ENCODE measurements at regions of chr1 and their contacts with region 1.

Region 1: DNA sequence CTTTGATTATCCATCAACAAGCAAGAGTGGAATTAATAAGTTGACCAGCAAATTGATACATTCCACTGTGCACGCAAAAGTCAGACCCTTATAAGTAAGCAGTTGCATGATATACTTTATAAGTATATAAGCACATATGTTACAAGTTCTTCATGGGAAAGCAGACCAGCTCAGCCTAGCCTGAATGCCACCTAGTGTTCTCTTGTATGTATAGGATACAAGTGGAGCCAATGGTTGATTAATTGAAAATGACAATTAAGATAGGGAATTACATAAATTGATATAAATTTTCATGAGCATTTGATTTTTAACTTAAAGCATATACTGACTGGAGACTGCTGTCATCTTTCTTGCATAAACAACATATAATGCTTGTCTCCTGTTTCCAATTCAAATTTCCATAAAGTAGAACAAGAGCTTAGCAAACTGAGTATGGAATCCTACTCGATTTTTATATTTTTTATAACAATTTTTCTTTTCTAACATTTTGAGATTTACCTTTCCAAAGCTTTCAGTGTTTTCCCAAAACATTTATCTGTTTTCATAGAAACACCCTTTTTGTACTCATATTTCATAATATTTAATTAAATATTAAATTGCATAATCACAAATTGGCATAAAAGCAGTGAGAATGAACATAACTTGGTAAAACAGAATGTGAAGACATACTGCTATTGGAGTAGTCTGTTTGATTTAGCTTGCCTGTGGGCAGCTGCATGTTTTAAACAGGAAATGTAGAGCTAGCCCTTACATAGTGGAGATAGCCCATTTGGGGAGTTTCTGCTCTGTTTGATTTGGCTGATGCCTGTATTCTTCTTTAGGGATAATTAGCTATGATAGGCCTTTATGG is 62.8 kb downstream of the MAGI3 start:
- DNase-seq: peak; percentile 26
- H3K4me3 ChIP-seq: no peak overlapping the region
- H3K27ac ChIP-seq: peak overlapping the region; percentile 30 to 79; a peak in 3 of 4 replicates
- H3K4me1 ChIP-seq: peaks cover 2 to 4% of the 10 kb centered on the region in 2 experiments; a peak in 2 of 4 replicates
- H3K27me3 ChIP-seq: no peaks in the 10 kb centered on the region
- CTCF ChIP-seq: peak; percentile 65
- EP300 ChIP-seq: no peak
- RAD21 ChIP-seq: peak; percentile 71

Region 2: DNA sequence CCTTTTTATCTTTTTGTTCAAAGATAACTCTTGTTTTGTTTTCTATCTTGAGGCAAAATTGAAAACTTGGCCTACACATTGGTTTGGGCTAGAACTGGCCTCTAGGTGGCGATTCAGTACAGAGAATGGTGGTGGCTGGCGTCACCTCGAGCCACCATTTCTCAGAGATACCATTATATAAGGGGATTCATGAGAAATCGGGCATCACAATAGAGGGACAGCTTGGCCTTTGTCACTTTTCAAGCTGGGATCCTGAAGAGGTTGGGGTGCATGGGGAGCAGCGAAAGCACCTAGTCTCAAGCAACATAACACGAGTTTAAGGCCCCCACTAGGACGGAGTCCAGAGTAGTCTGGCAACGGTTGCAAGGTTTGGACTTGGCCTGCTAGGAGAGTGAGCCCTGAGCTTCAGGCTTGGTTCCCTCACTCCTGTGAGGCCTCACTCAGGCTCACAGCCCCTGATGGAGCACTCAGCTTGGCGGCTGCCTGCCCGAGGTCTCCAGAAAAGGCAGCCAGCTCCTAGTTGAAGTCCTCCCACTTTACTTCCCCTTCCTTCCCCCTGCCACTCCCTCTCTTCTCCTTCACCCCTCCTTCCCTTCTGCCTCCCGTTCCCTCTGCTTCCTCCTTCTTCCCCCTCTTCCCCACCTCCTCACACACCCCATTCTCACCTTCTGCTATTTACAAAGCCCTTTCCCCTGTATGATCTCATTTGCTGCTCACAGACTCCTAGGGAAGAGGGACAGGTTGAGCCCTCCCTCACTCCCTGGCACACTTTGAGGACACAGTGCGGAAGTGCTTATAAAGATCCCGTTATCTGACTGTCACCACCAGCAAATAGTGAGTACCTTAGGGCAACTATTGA is 312.3 kb before region 1 on chr1:
- CTCF ChIA-PET with region 1: interaction called, 14 read pairs
- POLR2A ChIA-PET with region 1: interaction called, 3 read pairs
- DNase-seq: peak; percentile 66
- H3K4me3 ChIP-seq: no peak overlapping the region; a peak in 1 of 4 replicates
- H3K27ac ChIP-seq: peak overlapping the region in 1 of 2 experiments; percentile 85; a peak in 2 of 4 replicates
- H3K4me1 ChIP-seq: peaks cover 21 to 36% of the 10 kb centered on the region in 2 experiments; a peak in 3 of 4 replicates
- H3K27me3 ChIP-seq: no peaks in the 10 kb centered on the region
- CTCF ChIP-seq: peak; percentile 93
- EP300 ChIP-seq: peak in 1 of 2 experiments; percentile 3; a peak in 1 of 4 replicates
- RAD21 ChIP-seq: peak; percentile 98

Region 3: GRCh38 chr1:113442131-113442530 is 11.0 kb before region 1 on chr1:
- CTCF ChIA-PET with region 1: interaction called, 16 read pairs
- POLR2A ChIA-PET with region 1: no interaction called
- DNase-seq: no peak
- H3K4me3 ChIP-seq: no peak overlapping the region
- H3K27ac ChIP-seq: no peak overlapping the region
- H3K4me1 ChIP-seq: peaks cover 3 to 8% of the 10 kb centered on the region in 2 experiments; a peak in 3 of 4 replicates
- H3K27me3 ChIP-seq: no peaks in the 10 kb centered on the region
- CTCF ChIP-seq: no peak
- EP300 ChIP-seq: no peak
- RAD21 ChIP-seq: no peak

Region 4: DNA sequence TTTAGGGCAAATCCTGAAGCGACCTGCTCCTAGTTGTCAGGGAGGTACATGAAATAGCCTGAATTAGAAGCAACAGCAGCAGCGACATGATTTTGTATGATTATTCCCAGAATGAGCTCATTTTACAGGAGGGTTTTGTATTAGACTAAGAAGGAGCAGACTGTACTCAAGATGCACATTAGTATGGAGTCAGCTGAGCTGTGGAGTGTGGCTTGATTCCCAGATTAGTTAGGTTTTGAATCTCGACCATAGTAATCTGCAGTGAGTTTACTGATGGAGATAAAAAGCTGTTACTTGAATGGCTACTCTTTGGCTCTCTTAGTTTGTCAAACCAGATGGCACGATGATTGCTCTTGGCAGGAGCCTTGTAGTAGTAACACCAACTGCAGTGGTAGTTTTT is 163.0 kb after region 1 on chr1:
- CTCF ChIA-PET with region 1: no interaction called
- POLR2A ChIA-PET with region 1: no interaction called
- DNase-seq: no peak
- H3K4me3 ChIP-seq: no peak overlapping the region; a peak in 1 of 4 replicates
- H3K27ac ChIP-seq: peak overlapping the region; percentile 35 to 55
- H3K4me1 ChIP-seq: peaks cover 5 to 24% of the 10 kb centered on the region in 2 experiments; a peak in 2 of 4 replicates
- H3K27me3 ChIP-seq: no peaks in the 10 kb centered on the region
- CTCF ChIP-seq: no peak
- EP300 ChIP-seq: no peak
- RAD21 ChIP-seq: no peak

Measured in SK-N-SH (cell line).